H1 (cell line): ENCODE measurements at regions of chr2 and their contacts with region 1.

Region 1: GRCh38 chr2:332597-332996 is 44.7 kb upstream of the ALKAL2 start:
- DNase-seq: no peak
- H3K4me3 ChIP-seq: no peak overlapping the region
- H3K27ac ChIP-seq: no peak overlapping the region
- H3K4me1 ChIP-seq: no peaks in the 10 kb centered on the region
- H3K27me3 ChIP-seq: no peaks in the 10 kb centered on the region
- CTCF ChIP-seq: peak in 2 of 3 experiments; percentile 11 to 44; a peak in 2 of 4 replicates
- EP300 ChIP-seq: no peak
- POLR2A ChIP-seq: no peak
- RAD21 ChIP-seq: peak; percentile 6 to 23; a peak in 1 of 4 replicates

Region 2: DNA sequence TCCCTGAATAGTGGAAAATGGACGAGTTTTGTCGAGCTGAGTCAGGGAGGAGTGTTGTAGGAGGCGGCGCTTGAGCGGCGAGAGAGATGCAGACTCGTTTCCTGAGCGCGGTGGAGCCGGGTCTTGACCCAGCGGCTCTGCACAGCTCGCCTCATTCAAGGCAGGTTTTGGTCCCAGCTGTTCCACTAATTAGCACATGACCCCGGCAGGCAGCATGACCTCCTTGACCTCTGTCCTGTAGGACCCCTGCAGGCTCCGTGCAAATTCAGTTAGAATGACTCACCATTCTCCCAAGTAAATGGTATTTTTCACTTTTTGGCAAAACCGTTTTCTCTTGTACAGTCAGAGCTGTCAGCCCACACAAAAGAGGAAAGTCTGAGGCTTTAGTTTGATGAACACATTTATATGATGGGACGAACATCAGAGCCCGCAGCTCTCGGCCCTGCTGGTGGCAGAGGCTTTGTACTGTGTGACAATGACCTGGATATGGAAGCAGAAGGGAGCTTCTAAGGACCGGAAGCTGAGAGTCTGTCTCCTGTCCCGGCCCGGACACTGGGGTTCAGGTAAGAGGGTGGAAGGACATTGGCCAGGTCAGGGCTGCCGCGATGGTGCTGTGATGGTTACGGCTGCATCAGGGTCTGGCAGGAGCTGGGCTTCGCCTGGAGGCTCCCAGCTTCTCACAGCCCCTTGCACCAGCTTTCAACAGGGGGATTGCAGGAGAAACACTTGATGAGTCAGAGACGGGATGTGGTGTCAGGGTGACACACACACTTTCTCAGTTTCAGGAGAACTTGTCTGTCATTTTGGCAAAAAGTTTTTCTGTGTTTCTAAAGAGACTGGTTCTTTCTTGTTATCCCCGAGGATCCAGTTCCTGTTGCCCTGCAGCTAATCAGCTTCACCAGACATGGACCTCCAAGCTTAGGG is 14.8 kb before region 1 on chr2:
- CTCF ChIA-PET with region 1: interaction called, 12 read pairs
- POLR2A ChIA-PET with region 1: no interaction called
- DNase-seq: no peak
- H3K4me3 ChIP-seq: no peak overlapping the region
- H3K27ac ChIP-seq: no peak overlapping the region
- H3K4me1 ChIP-seq: peaks cover 0 to 8% (median 5%) of the 10 kb centered on the region in 4 experiments; a peak in 5 of 7 replicates
- H3K27me3 ChIP-seq: peaks cover 0 to 5% (median 0%) of the 10 kb centered on the region in 4 experiments; a peak in 1 of 7 replicates
- CTCF ChIP-seq: no peak
- EP300 ChIP-seq: no peak
- POLR2A ChIP-seq: no peak
- RAD21 ChIP-seq: no peak

Region 3: GRCh38 chr2:419687-420317 is 87.2 kb after region 1 on chr2:
- CTCF ChIA-PET with region 1: no interaction called
- POLR2A ChIA-PET with region 1: no interaction called
- DNase-seq: no peak
- H3K4me3 ChIP-seq: no peak overlapping the region
- H3K27ac ChIP-seq: no peak overlapping the region
- H3K4me1 ChIP-seq: no peaks in the 10 kb centered on the region
- H3K27me3 ChIP-seq: no peaks in the 10 kb centered on the region
- CTCF ChIP-seq: no peak
- EP300 ChIP-seq: no peak
- POLR2A ChIP-seq: no peak
- RAD21 ChIP-seq: no peak